Endothelial cell of umbilical vein (primary cell): ENCODE measurements at regions of chr4 and their contacts with region 1.

Region 1: DNA sequence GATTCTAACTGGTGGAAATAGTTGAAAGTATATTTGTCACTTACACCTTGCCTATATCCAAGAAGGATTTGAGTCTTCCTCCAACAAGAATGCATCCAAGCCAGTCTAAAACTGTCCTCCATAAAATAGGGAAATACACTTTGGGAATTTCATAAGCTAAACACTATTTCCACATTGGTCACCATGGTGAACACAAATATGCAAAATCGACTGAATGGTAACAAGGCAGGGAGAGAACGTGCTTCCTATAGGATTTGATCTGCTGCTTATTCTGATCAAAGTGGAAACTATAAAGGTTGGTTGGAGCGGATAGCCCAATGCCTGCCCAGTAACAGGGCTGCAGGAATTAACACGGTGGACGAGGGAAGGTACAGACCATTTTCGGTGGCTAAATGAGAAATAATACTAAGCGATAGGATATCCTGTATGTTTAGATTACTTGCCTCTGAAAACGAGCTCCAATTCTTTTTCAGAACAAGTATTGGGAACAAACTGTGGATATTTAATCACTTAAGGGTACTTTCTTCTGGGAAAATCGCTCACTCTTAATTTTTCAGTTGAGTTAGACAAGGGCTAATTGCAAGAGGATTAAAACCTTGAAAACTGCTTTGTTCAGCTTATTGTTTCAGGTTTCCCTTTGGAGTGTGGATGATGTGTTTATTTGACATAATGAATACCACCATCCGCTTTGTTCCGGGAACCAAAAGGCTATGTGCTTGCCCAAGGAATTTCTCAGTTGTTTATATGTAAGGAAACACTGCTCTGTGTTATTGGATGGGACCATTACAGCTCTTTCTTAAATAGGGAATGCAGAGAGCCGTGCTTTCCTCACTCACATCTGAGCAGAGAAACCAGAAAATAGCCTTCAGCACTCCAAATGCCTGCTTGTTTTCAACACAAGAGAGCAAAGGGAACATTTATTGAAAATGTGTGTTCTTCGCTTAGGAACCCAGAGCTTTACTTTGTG is 194.4 kb downstream of the CBR4 start:
- DNase-seq: peak; percentile 75
- H3K4me3 ChIP-seq: no peak overlapping the region
- H3K27ac ChIP-seq: no peak overlapping the region
- H3K4me1 ChIP-seq: peaks cover 6% of the 10 kb centered on the region
- H3K27me3 ChIP-seq: no peaks in the 10 kb centered on the region
- CTCF ChIP-seq: no peak
- POLR2A ChIP-seq: no peak

Region 2: DNA sequence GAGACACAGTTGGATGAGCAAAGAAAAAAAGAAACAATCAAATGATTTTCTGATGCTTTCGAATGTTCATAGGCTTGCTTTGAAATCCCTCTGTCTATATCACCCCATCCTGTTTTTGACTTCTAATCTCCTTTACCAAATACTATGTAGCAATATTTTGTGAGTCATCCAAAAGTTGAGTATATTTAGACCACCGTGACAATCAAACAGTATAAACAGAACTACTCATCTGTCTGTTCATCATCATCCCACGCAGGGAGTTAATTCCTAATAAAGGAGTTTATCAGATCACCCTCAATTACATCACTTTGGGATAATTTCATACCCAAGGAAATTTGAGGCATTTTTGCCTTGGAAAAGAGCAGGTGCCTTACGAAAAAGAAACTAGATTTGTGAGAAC is 18.5 kb before region 1 on chr4:
- CTCF ChIA-PET with region 1: no interaction called
- POLR2A ChIA-PET with region 1: no interaction called
- dilution Hi-C with region 1: no loop called
- intact Hi-C with region 1: loop called (anchors 1 kb)
- DNase-seq: peak; percentile 72
- H3K4me3 ChIP-seq: no peak overlapping the region
- H3K27ac ChIP-seq: peak overlapping the region; percentile 47
- H3K4me1 ChIP-seq: peaks cover 22% of the 10 kb centered on the region
- H3K27me3 ChIP-seq: no peaks in the 10 kb centered on the region
- CTCF ChIP-seq: no peak
- POLR2A ChIP-seq: no peak